Caco-2 (cell line): ENCODE measurements at regions of chr22 and their contacts with region 1.

Region 1: GRCh38 chr22:42294034-42294985 is 23.9 kb upstream of the TCF20 start:
- DNase-seq: peak; percentile 64 to 78
- H3K4me3 ChIP-seq: no peak overlapping the region
- H3K4me3 Mint-ChIP-seq: no peak overlapping the region
- H3K27ac Mint-ChIP-seq: no peak overlapping the region
- H3K4me1 ChIP-seq: peaks cover 70% of the 10 kb centered on the region
- H3K4me1 Mint-ChIP-seq: peaks cover 28% of the 10 kb centered on the region
- H3K27me3 ChIP-seq: no peaks in the 10 kb centered on the region
- H3K27me3 Mint-ChIP-seq: no peaks in the 10 kb centered on the region
- CTCF ChIP-seq: no peak

Region 2: GRCh38 chr22:42277988-42278776 is 16.1 kb before region 1 on chr22:
- CTCF ChIA-PET with region 1: interaction called, 11 read pairs
- POLR2A ChIA-PET with region 1: no interaction called
- intact Hi-C with region 1: no loop called
- DNase-seq: peak; percentile 75 to 78
- H3K4me3 ChIP-seq: no peak overlapping the region
- H3K4me3 Mint-ChIP-seq: no peak overlapping the region
- H3K27ac Mint-ChIP-seq: peak overlapping the region; percentile 55
- H3K4me1 ChIP-seq: peaks cover 52% of the 10 kb centered on the region
- H3K4me1 Mint-ChIP-seq: peaks cover 38% of the 10 kb centered on the region
- H3K27me3 ChIP-seq: no peaks in the 10 kb centered on the region
- H3K27me3 Mint-ChIP-seq: no peaks in the 10 kb centered on the region
- CTCF ChIP-seq: peak in 1 of 2 experiments; percentile 62

Region 3: DNA sequence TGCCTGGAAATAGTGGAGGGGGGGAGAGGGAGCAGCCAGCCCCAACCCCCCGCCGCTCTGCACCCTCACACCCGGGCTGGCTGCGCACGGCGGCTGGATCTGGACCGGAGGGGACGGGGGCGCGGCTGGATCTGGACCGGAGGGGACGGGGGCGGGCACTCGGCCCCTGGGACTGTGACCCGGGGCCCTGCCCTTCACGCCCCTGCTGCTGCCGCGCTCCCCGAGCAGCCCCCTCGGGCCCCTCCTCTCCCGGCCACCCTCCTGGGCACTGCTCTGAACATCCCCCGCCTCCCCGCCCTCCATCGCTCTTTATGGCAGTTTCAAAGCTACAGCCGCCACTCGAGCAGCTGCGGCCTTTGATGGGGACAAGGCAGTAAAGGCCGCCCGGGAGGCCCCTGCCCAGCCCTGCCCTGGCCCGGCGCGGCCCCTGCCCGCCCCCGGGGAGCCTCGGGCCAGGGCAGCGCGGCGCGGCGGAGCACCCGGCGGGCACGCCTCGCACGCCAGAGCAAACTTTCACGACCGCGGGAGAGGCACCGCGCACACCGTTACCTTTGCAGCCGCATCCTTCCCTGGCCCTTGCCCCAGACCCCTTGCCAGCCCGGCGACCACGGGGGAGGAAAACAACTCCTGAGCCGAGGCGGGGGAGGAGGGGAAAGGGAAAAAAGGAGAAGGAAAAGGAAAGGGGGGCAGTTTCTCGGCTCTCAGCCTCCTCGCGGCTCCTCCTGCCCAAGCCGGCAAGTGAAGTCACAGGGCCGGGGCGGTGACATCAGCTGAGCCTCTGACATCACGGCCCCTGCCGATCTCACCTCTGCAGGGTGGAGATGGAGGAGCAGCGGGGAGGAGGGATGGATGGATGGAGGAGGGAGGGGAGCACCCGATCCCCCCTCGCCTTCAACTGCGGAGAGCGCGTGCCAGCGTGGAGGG is 10.8 kb before region 1 on chr22:
- CTCF ChIA-PET with region 1: interaction called, 11 read pairs
- POLR2A ChIA-PET with region 1: interaction called, 5 read pairs
- intact Hi-C with region 1: loop called (anchors 1 kb)
- DNase-seq: peak; percentile 86 to 88
- H3K4me3 ChIP-seq: peak overlapping the region; percentile 41
- H3K4me3 Mint-ChIP-seq: peak overlapping the region; percentile 42
- H3K27ac Mint-ChIP-seq: peak overlapping the region; percentile 22
- H3K4me1 ChIP-seq: peaks cover 78% of the 10 kb centered on the region
- H3K4me1 Mint-ChIP-seq: peaks cover 31% of the 10 kb centered on the region
- H3K27me3 ChIP-seq: no peaks in the 10 kb centered on the region
- H3K27me3 Mint-ChIP-seq: no peaks in the 10 kb centered on the region
- CTCF ChIP-seq: no peak

Region 4: GRCh38 chr22:42360348-42360747 is 66.0 kb after region 1 on chr22:
- CTCF ChIA-PET with region 1: no interaction called
- POLR2A ChIA-PET with region 1: no interaction called
- intact Hi-C with region 1: no loop called
- DNase-seq: no peak
- H3K4me3 ChIP-seq: no peak overlapping the region
- H3K4me3 Mint-ChIP-seq: no peak overlapping the region
- H3K27ac Mint-ChIP-seq: no peak overlapping the region
- H3K4me1 ChIP-seq: no peaks in the 10 kb centered on the region
- H3K4me1 Mint-ChIP-seq: peaks cover under 1% of the 10 kb centered on the region
- H3K27me3 ChIP-seq: no peaks in the 10 kb centered on the region
- H3K27me3 Mint-ChIP-seq: no peaks in the 10 kb centered on the region
- CTCF ChIP-seq: no peak

Region 5: GRCh38 chr22:42376711-42377554 is 82.6 kb after region 1 on chr22:
- CTCF ChIA-PET with region 1: no interaction called
- POLR2A ChIA-PET with region 1: no interaction called
- intact Hi-C with region 1: no loop called
- DNase-seq: peak; percentile 32 to 53
- H3K4me3 ChIP-seq: no peak overlapping the region
- H3K4me3 Mint-ChIP-seq: no peak overlapping the region
- H3K27ac Mint-ChIP-seq: peak overlapping the region; percentile 17
- H3K4me1 ChIP-seq: peaks cover 5% of the 10 kb centered on the region; the same call in 1 of the 2 replicates
- H3K4me1 Mint-ChIP-seq: peaks cover 22% of the 10 kb centered on the region
- H3K27me3 ChIP-seq: no peaks in the 10 kb centered on the region
- H3K27me3 Mint-ChIP-seq: no peaks in the 10 kb centered on the region
- CTCF ChIP-seq: no peak